ENCODE measurements at regions of chr18 and their contacts with region 1.

Region 1: DNA sequence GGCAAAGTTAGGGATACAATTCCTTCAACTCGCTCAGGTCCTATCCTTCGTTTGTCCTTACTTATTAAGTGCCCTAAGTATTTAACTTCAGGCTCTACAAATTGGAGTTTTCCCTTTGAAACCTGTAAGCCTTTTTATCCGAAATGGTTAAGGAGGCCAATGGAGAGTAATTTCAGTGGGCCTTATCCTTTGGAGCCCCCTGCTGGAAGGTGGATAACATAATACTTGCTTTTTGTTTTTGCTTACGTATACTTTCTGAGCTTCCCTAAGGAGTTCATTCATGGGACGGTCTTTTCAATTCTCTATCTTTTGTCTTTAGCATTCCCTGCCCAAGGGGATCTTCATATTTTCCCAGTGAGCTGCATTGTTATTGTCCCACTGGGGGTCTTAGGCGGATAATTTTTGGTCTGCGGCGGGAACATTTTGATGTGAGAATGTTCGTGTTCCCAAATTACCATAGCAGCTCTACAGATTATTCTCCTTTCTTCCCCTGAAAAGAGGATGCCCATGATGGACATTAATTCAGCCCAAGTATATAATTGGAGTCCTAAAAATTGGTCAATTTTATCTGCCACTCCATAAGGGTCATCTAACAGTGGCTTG is 34.4 kb upstream of the TRAPPC8 start:
- DNase-seq: peak in 35 of 42 donors; percentile 22 to 86 (median 63)

Region 2: GRCh38 chr18:31741097-31741735 is 236.2 kb before region 1 on chr18:
- intact Hi-C with region 1: loop called (anchors 5 kb)
- DNase-seq: peak in 39 of 42 donors; percentile 4 to 85 (median 60)

Region 3: DNA sequence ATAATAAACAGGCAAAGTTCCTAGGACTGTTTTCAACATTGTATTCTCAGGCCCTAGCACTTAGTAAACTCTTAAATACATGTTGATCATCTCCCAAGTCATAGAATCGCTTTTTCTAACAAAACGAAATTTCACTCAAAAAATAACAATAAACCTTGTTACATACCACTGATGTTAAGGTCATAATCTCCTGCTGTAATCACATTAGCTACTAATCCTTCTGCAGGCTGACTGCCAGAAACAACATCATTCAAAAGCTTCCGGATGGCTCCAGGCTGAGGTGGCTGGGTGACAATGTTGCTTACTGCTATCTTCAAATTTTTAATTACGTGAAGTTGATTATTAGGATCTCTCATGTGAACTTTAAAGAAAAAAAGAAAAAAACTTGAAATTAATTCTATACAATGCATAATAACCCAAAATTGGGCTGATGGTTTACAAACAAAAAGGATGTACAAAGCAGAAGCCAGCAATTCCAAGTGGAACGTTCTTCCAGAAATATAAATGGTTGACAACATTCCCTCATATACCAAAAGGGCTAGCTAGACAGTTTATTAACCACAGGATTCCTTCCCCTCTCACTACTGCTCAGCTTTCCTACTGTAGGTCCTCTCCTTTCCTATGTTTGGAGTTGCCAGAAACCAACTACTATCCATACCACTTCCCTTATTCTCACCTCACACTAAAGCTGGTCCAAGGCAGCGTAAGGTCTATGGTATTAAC is 46.0 kb before region 1 on chr18:
- intact Hi-C with region 1: no loop called
- DNase-seq: no peak